ENCODE measurements at regions of chr12 and their contacts with region 1.

Region 1: GRCh38 chr12:104519190-104519989 is 62.6 kb downstream of the CHST11 start:
- DNase-seq: no peak
- H3K4me3 ChIP-seq: no peak overlapping the region
- H3K27ac ChIP-seq: no peak overlapping the region
- H3K4me1 ChIP-seq: 0 out of 2 replicates have a peak, but pooled peaks cover 10% of the 10 kb centered on the region
- H3K27me3 ChIP-seq: no peaks in the 10 kb centered on the region
- CTCF ChIP-seq: no peak

Region 2: DNA sequence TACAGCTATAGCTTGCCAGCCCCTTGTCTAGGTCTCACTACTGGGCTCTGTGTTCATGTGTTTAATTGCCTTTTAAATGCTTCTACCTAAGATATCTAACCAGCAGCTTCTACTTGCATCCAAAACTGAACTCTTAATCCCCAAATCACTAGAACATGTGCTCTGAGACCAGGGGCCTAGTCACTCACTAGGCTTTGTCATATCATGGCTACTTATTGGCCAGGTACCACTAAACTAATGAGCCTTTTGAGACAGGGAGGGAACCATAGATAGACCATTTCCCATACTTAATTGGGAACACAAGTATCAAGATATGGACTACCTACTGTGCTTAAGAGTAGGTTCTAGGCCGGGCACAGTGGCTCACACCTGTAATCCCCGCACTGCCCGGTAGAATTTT is 582.7 kb before region 1 on chr12:
- CTCF ChIA-PET with region 1: no interaction called
- POLR2A ChIA-PET with region 1: no interaction called
- intact Hi-C with region 1: no loop called
- DNase-seq: no peak
- H3K4me3 ChIP-seq: no peak overlapping the region
- H3K27ac ChIP-seq: no peak overlapping the region
- H3K4me1 ChIP-seq: peaks cover 19% of the 10 kb centered on the region
- H3K27me3 ChIP-seq: no peaks in the 10 kb centered on the region
- CTCF ChIP-seq: no peak

Region 3: DNA sequence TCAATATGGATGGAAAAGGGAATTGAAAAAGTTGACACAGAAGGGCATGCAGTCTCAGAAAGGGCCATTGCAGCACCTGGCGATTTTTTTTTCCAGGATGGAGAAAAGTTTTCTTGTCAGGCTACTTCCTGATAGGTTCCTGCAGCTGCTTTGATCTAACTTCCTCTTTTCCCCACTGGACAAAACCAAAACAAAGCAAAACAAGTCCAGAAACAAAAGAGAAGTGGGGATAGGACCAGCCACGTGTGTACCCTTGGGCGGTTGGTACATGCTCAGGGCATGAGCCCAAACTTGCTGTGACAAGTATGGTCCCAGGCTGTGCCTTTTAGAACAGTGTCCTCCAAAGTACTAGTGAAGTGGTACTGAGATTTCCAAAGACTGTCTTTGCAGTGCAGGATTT is 27.2 kb after region 1 on chr12:
- CTCF ChIA-PET with region 1: no interaction called
- POLR2A ChIA-PET with region 1: no interaction called
- intact Hi-C with region 1: loop called (anchors 1 kb)
- DNase-seq: no peak
- H3K4me3 ChIP-seq: no peak overlapping the region
- H3K27ac ChIP-seq: no peak overlapping the region
- H3K4me1 ChIP-seq: peaks cover 7% of the 10 kb centered on the region; the same call in 1 of the 2 replicates
- H3K27me3 ChIP-seq: no peaks in the 10 kb centered on the region
- CTCF ChIP-seq: no peak

Measured in PC-9 (cell line).